ENCODE measurements at regions of chr3 and their contacts with region 1.

Region 1: GRCh38 chr3:130014526-130014925 is 40.0 kb downstream of the TRH start:
- DNase-seq: no peak
- H3K4me3 ChIP-seq: no peak overlapping the region
- H3K27ac ChIP-seq: no peak overlapping the region
- H3K4me1 ChIP-seq: no peaks in the 10 kb centered on the region
- H3K27me3 ChIP-seq: peaks cover 0 to 15% (median 0%) of the 10 kb centered on the region in 4 donors
- CTCF ChIP-seq: no peak
- EP300 ChIP-seq: no peak
- POLR2A ChIP-seq: no peak

Region 2: GRCh38 chr3:129918461-129918860 is 96.1 kb before region 1 on chr3:
- intact Hi-C with region 1: no loop called
- DNase-seq: no peak
- H3K4me3 ChIP-seq: no peak overlapping the region
- H3K27ac ChIP-seq: no peak overlapping the region
- H3K4me1 ChIP-seq: no peaks in the 10 kb centered on the region
- H3K27me3 ChIP-seq: no peaks in the 10 kb centered on the region
- CTCF ChIP-seq: no peak
- EP300 ChIP-seq: no peak
- POLR2A ChIP-seq: no peak

Region 3: DNA sequence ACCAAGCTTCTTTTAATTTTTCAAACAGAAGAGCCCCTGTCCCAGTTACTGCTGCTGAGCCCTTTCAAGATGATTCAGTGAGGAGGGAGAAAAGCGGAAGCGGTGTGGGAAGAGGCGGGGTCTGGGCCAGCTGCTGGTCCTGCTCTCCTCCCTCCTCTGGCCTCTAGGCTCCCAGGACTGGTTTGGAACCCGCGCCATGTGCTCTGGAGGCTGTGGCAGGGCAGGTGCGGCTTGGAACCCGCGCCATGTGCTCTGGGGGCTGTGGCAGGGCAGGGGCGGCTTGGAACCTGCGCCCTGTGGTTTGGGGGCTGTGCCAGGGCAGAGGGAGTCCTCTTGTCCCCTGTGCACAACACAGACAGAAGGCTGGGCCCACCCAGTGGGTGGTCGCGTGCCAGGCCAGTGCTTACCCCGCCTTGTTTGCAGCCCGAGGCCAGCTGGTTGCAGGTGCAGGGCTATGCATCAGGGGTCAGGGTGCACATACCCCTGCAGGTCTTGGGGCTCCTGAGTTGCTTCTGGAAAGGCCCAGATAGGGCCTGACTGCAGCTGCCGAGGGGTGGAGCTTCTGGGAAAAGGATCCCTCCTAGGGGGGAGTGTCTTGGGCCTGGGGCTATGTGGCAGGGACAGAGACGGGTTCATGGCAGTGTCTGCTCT is 79.3 kb after region 1 on chr3:
- intact Hi-C with region 1: loop called (anchors 10 kb)
- DNase-seq: no peak
- H3K4me3 ChIP-seq: peak overlapping the region in 1 of 4 donors; percentile 12
- H3K27ac ChIP-seq: no peak overlapping the region
- H3K4me1 ChIP-seq: no peaks in the 10 kb centered on the region
- H3K27me3 ChIP-seq: peaks cover 0 to 33% (median 0%) of the 10 kb centered on the region in 4 donors
- CTCF ChIP-seq: no peak
- EP300 ChIP-seq: no peak
- POLR2A ChIP-seq: no peak